ENCODE measurements at regions of chr3 and their contacts with region 1.

Region 1: DNA sequence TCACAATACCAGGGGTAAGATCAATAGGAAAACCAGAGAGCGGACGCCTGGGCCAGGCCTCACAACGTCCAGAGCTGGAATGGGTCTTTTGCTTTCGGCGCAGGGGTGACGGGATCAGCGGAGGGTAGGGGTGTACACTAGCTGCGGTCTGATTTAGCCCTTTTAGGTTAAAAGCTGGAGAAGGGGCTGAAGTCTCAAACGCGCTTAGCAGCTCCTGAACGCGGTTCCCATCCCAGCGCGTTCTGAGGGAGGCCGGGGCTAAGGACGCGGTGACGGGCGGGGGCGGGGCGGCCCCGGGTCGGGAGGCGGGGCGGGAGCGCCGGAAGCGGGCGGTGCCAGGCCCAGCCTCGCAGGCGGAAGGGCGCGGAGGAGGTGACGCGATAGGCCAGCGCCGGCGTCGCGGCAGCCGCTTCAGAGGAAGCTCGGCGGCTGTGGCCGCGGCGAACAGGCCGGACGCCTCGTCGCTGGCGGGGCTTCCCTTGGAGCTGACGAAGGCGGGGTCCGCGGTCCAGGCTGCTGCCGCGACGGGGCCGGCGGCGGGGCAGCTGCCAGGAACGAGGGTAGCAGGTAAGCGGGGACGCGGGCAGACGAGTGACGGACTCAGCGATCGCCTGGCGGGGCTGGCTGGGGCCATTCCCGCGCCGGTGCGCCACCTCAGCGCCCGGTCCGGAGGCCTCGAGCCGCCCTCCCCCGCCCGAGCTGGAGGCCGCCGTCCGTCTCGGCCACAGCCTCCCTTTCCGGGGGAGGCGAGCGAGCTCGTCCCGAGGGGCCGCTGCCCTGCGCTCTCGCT is at the start of gene SENP5:
- DNase-seq: peak; percentile 91 to 96 (median 94)
- ATAC-seq: peak; percentile 95 to 99 (median 99)
- H3K4me3 ChIP-seq: peak within 1 kb of the TSS; percentile 63 to 99 (median 97)
- H3K27ac ChIP-seq: peak within 1 kb of the TSS; percentile 18 to 97 (median 94)
- H3K4me1 ChIP-seq: peaks cover 0 to 34% (median 21%) of the 10 kb centered on the region in 12 donors
- H3K27me3 ChIP-seq: no peaks in the 10 kb centered on the region
- CTCF ChIP-seq: no peak
- POLR2A ChIP-seq: peak in 1 of 2 donors; percentile 94
- total RNA-seq, gene SENP5: 16.8 to 28.5 (median 22.9) TPM

Region 2: GRCh38 chr3:196568246-196569002 is 299.3 kb before region 1 on chr3 and contains the starts of genes FBXO45 and WDR53:
- intact Hi-C with region 1: loop called in 1 of 10 experiments (anchors 10 kb)
- DNase-seq: peak; percentile 95 to 97 (median 96)
- ATAC-seq: peak; percentile 99 to 100 (median 99)
- H3K4me3 ChIP-seq: peak within 1 kb of the TSS; percentile 52 to 98 (median 80)
- H3K27ac ChIP-seq: peak within 1 kb of the TSS in 11 of 12 donors; percentile 68 to 93 (median 83)
- H3K4me1 ChIP-seq: peaks cover 0 to 45% (median 22%) of the 10 kb centered on the region in 12 donors
- H3K27me3 ChIP-seq: no peaks in the 10 kb centered on the region
- CTCF ChIP-seq: peak in 2 of 12 donors; percentile 7 to 15
- POLR2A ChIP-seq: peak in 1 of 2 donors; percentile 76
- total RNA-seq, gene FBXO45: 5.3 to 7.9 (median 6.6) TPM
- total RNA-seq, gene WDR53: 4.2 to 15.5 (median 8.4) TPM

Region 3: DNA sequence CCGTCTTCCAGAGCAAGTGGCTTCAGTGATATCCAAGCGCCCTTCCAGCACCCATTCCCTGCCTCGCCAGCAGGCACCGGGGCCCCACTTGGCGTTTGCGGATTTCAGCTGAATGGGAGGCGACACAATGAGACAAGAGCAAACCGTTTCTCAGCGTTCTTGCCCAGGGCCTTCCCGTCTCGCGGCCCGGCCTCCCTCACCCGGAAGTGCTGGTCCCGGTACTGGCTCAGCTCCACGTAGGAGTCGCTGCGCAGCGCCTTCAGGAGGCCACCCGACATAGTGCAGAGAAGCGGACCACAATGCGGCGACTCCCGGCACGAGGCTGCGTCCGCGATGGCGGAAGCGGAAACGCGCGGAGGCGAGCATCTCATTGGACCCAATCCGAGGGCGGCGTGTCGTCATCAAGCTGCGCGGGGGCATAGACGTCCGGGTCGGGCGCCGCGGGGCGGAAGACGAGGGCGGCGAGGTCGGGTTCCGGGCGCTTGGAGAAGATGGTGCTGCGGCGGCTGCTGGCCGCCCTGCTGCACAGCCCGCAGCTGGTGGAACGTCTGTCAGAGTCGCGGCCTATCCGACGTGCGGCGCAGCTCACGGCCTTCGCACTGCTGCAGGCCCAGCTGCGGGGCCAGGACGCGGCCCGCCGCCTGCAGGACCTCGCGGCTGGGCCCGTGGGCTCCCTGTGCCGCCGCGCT is 74.7 kb after region 1 on chr3 and contains the start of gene NCBP2:
- intact Hi-C with region 1: loop called in 8 of 10 experiments (anchors 1 to 5 kb)
- DNase-seq: peak; percentile 99 to 100 (median 99)
- ATAC-seq: peak; percentile 96 to 98 (median 96)
- H3K4me3 ChIP-seq: peak within 1 kb of the TSS; percentile 70 to 100 (median 96)
- H3K27ac ChIP-seq: peak within 1 kb of the TSS; percentile 63 to 98 (median 91)
- H3K4me1 ChIP-seq: peaks cover 4 to 38% (median 22%) of the 10 kb centered on the region in 12 donors
- H3K27me3 ChIP-seq: no peaks in the 10 kb centered on the region
- CTCF ChIP-seq: peak; percentile 26 to 76 (median 60)
- POLR2A ChIP-seq: peak; percentile 52 to 83
- total RNA-seq, gene NCBP2: 20.7 to 43.8 (median 38.9) TPM

Measured in heart left ventricle (tissue), 16 donors.